ENCODE measurements at regions of chr1 and their contacts with region 1.

Region 1: GRCh38 chr1:239951511-239952140 is 140.1 kb upstream of the FMN2 start:
- DNase-seq: peak; percentile 73
- ATAC-seq: peak; percentile 68
- H3K4me3 ChIP-seq: no peak overlapping the region
- H3K27ac ChIP-seq: no peak overlapping the region
- H3K4me1 ChIP-seq: no peaks in the 10 kb centered on the region
- H3K27me3 ChIP-seq: peaks cover 5% of the 10 kb centered on the region
- CTCF ChIP-seq: peak; percentile 76
- POLR2A ChIP-seq: no peak
- RAD21 ChIP-seq: peak; percentile 75

Region 2: DNA sequence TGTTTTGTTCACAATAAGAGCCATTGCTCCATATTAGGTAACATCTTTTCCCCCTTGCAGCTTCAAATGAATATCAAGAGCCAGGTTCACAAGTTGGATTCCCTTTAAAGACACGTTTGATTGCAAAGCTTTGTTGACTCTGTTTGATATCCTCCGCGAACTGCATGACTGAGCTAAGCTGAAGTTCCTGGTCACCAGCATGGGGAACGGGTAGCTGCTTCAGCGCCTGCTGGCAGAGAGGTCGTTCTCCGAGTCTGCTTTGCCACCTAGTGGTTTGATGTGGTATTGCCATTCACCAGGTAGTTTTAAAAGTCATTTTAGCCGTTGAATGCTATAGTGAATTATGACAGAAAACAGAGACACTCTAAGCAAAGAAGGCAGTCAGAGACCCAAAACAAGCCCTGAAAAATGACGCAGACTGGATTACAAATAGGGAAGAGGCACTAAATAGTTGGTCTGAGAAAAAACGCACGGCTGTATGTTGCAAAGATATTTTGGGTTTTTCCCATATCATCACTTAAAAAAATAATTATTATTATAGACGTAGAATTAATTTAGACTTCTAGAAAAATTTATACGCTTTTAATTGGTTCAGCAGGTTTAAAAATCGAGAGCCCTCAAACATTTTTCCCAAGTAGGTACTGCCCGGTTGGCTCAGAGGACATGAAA is 53.4 kb before region 1 on chr1:
- CTCF ChIA-PET with region 1: no interaction called
- POLR2A ChIA-PET with region 1: no interaction called
- dilution Hi-C with region 1: no loop called
- in situ Hi-C with region 1: no loop called
- intact Hi-C with region 1: no loop called
- DNase-seq: peak; percentile 75
- ATAC-seq: peak; percentile 99
- H3K4me3 ChIP-seq: no peak overlapping the region
- H3K27ac ChIP-seq: no peak overlapping the region
- H3K4me1 ChIP-seq: no peaks in the 10 kb centered on the region
- H3K27me3 ChIP-seq: no peaks in the 10 kb centered on the region; the same call in 1 of the 2 replicates
- CTCF ChIP-seq: peak; percentile 93
- POLR2A ChIP-seq: no peak
- RAD21 ChIP-seq: peak; percentile 94

Region 3: GRCh38 chr1:239976130-239976968 is 24.7 kb after region 1 on chr1:
- CTCF ChIA-PET with region 1: interaction called, 15 read pairs
- POLR2A ChIA-PET with region 1: interaction called, 4 read pairs
- dilution Hi-C with region 1: no loop called
- in situ Hi-C with region 1: no loop called
- intact Hi-C with region 1: loop called (anchors 1 kb)
- DNase-seq: peak; percentile 59
- ATAC-seq: peak; percentile 88
- H3K4me3 ChIP-seq: no peak overlapping the region
- H3K27ac ChIP-seq: no peak overlapping the region
- H3K4me1 ChIP-seq: no peaks in the 10 kb centered on the region
- H3K27me3 ChIP-seq: peaks cover 3% of the 10 kb centered on the region
- CTCF ChIP-seq: peak; percentile 90
- POLR2A ChIP-seq: no peak
- RAD21 ChIP-seq: peak; percentile 78

Region 4: DNA sequence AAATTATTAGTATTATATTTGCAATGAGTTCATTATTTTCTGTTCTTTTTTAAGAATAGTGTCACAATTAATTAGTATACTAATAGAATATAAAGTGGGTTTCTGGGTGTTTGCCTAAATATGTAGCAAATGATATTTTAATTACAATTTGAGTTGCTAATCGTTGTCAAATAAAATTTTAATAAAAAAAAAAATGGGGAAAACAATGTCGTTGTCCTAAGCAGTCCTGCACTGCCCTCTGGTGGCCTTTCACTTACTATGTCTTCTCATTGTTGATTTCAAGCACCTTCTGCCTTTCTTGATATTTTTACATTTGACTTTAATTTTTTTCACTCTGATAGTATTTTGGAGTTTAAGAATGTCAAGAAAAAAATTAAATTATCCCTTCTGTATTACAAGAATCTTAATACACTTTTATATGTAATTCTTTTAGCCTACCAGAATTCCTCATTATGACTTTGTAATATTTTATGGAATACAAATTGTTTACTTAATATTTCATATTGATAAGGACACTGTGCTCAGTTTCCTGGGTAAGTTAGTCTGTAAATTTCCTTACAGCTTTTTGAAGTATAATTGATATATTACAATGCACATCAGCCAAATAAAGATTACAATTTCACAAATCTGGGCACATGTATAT is 35.6 kb after region 1 on chr1:
- CTCF ChIA-PET with region 1: interaction called, 8 read pairs
- POLR2A ChIA-PET with region 1: no interaction called
- dilution Hi-C with region 1: no loop called
- in situ Hi-C with region 1: no loop called
- intact Hi-C with region 1: loop called (anchors 2 kb)
- DNase-seq: peak; percentile 55
- ATAC-seq: peak; percentile 61; the same call in 1 of the 2 replicates
- H3K4me3 ChIP-seq: no peak overlapping the region
- H3K27ac ChIP-seq: no peak overlapping the region
- H3K4me1 ChIP-seq: no peaks in the 10 kb centered on the region
- H3K27me3 ChIP-seq: peaks cover 8% of the 10 kb centered on the region
- CTCF ChIP-seq: peak; percentile 71
- POLR2A ChIP-seq: no peak
- RAD21 ChIP-seq: peak; percentile 65

Region 5: DNA sequence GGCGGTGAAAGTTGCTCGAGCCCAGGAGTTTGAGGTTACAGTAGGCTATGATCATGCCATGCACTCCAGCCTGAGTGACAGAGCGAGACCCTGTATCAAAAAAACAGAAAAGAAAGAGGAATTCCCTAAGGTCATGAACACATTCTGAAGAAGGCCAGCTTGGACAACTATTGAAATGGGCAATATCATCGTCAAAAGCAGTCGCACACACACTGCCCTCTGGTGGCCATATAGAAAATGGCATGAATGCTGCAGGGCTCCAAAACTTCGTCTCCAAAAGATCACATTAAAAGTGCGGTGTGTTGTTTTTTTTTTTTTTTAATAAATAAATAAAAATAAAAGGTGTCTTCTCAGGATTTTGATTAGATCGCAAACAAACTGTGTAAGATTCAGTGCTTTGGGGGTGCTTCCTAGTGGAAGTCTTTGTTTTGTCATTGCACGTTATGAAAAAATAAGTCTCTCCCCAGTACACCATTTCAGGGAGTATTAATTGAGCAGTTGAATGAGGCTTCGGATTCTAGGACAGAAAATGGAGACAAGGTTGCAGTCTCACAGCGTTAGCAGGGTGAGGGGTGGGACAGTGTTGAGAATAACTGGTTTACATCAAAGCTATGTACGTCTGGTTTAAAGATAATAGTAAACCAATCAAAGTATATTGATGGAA is 52.6 kb after region 1 on chr1:
- CTCF ChIA-PET with region 1: interaction called, 10 read pairs
- POLR2A ChIA-PET with region 1: no interaction called
- dilution Hi-C with region 1: no loop called
- in situ Hi-C with region 1: no loop called
- intact Hi-C with region 1: no loop called
- DNase-seq: peak; percentile 16
- ATAC-seq: peak; percentile 58
- H3K4me3 ChIP-seq: no peak overlapping the region
- H3K27ac ChIP-seq: no peak overlapping the region
- H3K4me1 ChIP-seq: no peaks in the 10 kb centered on the region
- H3K27me3 ChIP-seq: peaks cover 9% of the 10 kb centered on the region
- CTCF ChIP-seq: peak; percentile 61
- POLR2A ChIP-seq: no peak
- RAD21 ChIP-seq: peak; percentile 19; the same call in 1 of the 2 replicates

Region 6: DNA sequence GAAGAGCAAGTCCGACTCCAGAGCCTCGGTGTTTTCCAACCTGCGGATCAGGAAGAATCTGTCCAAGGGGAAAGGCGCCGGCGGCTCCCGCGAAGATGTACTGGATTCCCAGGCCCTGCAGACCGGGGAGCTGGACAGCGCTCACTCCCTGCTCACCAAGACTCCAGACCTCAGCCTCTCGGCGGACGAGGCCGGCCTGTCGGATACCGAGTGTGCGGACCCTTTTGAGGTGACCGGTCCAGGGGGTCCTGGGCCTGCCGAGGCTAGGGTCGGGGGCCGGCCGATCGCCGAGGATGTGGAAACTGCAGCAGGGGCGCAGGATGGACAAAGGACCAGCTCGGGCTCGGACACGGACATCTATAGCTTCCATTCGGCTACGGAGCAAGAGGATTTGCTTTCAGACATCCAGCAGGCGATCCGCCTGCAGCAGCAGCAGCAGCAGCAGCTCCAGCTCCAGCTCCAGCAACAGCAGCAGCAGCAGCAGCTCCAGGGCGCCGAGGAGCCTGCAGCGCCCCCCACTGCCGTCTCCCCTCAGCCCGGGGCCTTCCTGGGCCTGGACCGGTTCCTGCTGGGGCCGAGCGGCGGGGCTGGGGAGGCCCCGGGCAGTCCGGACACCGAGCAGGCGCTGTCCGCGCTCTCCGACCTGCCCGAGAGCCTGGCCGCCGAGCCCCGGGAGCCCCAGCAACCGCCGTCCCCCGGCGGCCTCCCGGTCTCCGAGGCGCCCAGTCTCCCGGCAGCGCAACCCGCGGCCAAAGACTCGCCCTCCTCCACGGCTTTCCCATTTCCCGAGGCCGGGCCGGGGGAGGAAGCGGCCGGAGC is 140.9 kb after region 1 on chr1:
- CTCF ChIA-PET with region 1: no interaction called
- POLR2A ChIA-PET with region 1: no interaction called
- dilution Hi-C with region 1: no loop called
- in situ Hi-C with region 1: no loop called
- intact Hi-C with region 1: no loop called
- DNase-seq: peak; percentile 74
- ATAC-seq: peak; percentile 57
- H3K4me3 ChIP-seq: peak overlapping the region; percentile 89
- H3K27ac ChIP-seq: peak overlapping the region; percentile 33
- H3K4me1 ChIP-seq: peaks cover 2% of the 10 kb centered on the region; the same call in 1 of the 2 replicates
- H3K27me3 ChIP-seq: no peaks in the 10 kb centered on the region
- CTCF ChIP-seq: peak; percentile 35
- POLR2A ChIP-seq: no peak
- RAD21 ChIP-seq: peak; percentile 15; the same call in 1 of the 2 replicates